BJ (cell line): ENCODE measurements at regions of chr2 and their contacts with region 1.

Region 1: GRCh38 chr2:218229239-218229638 is 12.2 kb downstream of the ARPC2 start:
- DNase-seq: peak; percentile 80
- H3K4me3 ChIP-seq: no peak overlapping the region
- H3K27me3 ChIP-seq: no peaks in the 10 kb centered on the region
- CTCF ChIP-seq: no peak

Region 2: DNA sequence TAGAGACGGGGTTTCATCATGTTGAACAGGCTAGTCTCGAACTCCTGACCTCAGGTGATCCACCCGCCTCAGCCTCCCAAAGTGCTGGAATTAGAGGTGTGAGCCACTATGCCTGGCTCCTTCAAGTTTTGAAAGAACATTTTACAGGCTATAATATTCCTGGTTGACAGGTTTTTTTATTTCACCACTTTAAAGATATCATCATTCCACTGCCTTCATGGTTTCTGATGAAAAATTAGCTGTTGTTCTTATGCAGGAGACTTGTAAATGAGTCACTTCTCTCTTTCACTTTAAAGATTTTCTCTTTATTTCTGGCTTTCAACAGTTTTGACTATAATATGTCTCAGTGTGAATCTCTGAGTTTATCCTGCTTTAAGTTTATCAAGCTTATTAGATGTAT is 20.2 kb before region 1 on chr2:
- CTCF ChIA-PET with region 1: no interaction called
- POLR2A ChIA-PET with region 1: no interaction called
- DNase-seq: no peak
- H3K4me3 ChIP-seq: no peak overlapping the region
- H3K27me3 ChIP-seq: peaks cover 3% of the 10 kb centered on the region
- CTCF ChIP-seq: no peak

Region 3: GRCh38 chr2:218257390-218257981 is 28.2 kb after region 1 on chr2:
- CTCF ChIA-PET with region 1: interaction called, 12 read pairs
- POLR2A ChIA-PET with region 1: no interaction called
- DNase-seq: no peak
- H3K4me3 ChIP-seq: no peak overlapping the region
- H3K27me3 ChIP-seq: no peaks in the 10 kb centered on the region
- CTCF ChIP-seq: peak; percentile 67

Region 4: DNA sequence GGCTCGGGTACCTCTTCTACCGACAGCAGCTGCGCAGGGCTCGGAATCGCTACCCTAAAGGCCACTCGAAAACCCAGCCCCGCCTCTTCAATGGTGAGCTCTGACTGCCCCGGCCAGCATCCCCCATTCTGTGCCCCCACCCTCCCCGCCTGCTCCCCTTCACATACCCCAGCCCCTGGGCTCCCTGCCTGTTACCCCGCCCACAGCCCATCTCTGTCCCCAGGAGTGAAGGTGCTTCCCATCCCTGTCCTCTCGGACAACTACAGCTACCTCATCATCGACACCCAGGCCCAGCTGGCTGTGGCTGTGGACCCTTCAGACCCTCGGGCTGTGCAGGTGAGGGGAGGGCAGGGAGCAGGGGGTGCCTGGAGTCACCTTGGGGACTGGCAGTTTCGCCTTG is 110.6 kb after region 1 on chr2:
- CTCF ChIA-PET with region 1: no interaction called
- POLR2A ChIA-PET with region 1: no interaction called
- DNase-seq: no peak
- H3K4me3 ChIP-seq: no peak overlapping the region
- H3K27me3 ChIP-seq: no peaks in the 10 kb centered on the region
- CTCF ChIP-seq: no peak